Sciatic nerve (tissue), 2 donors: ENCODE measurements at regions of chr2 and their contacts with region 1.

Region 1: GRCh38 chr2:238784671-238785527 is 63.0 kb upstream of the TWIST2 start:
- DNase-seq: peak; percentile 87
- ATAC-seq: peak; percentile 95

Region 2: GRCh38 chr2:238370823-238371372 is 414.0 kb before region 1 on chr2:
- intact Hi-C with region 1: loop called (anchors 2 kb)
- DNase-seq: peak; percentile 81
- ATAC-seq: peak; percentile 98

Region 3: DNA sequence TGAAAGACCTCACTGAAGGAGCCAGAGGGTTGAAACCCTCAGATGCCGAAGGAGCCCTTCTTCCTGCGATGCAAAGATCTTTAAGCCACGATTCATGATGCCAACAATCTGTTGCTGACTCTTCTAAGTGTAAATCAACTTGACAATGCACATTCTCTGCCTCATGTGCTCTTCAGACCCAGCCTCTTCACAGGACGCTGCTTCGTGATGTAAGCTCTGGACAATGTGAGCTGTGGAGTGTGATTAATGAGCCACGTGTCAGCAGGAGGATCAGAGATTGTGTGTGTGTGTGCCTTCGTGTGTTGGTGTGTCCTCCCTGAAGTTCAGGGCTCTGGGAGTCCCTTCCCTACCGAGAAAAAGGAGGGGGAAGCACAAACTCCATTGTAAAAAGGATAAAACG is 36.5 kb after region 1 on chr2:
- intact Hi-C with region 1: no loop called
- DNase-seq: no peak
- ATAC-seq: no peak